ENCODE measurements at regions of chr17 and their contacts with region 1.

Region 1: DNA sequence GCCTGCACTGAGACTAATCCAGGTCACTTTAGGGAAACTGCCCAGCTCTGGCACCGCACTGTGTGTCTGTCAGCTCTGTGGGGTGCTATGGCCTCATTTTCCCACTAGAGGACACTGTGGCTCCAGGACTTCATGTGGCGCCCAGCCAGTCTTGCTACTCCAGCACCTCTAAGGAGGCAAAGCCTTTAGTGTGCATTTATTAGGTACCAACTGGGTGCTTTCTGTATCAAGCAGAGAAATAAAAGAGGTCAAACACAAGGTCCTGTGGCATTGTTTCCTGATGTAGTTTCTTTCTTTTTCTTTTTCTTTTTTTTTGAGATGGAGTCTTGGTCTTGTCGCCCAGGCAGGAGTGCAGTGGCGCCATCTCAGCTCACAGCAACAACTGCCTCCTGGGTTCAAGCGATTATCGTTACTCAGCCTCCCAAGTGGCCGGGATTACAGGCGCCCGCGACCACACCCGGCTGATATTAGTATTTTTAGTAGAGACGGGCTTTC is 12.5 kb upstream of the RHBDL3 start:
- DNase-seq: peak; percentile 88
- ATAC-seq: peak; percentile 96

Region 2: DNA sequence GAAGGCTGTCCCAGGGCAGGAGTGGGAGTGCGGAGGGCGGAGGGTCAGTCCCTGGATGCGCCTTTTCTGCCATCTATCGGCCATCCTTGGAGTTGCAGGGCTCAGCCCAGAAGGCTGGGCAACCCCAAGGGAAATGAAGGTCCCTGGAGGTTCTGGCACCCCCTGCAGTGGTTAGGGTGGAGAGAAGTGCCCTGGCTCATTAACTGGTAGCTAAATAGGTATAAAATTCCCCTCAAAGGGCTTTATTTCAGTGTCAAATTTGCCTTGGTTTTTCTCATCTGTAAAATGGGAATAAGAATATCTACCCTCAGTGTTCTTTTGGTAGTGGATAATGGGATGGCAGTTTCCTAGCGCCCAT is 66.4 kb after region 1 on chr17:
- intact Hi-C with region 1: loop called (anchors 2 kb)
- DNase-seq: peak; percentile 86
- ATAC-seq: peak; percentile 95